PC-3 (cell line): ENCODE measurements at regions of chr1 and their contacts with region 1.

Region 1: DNA sequence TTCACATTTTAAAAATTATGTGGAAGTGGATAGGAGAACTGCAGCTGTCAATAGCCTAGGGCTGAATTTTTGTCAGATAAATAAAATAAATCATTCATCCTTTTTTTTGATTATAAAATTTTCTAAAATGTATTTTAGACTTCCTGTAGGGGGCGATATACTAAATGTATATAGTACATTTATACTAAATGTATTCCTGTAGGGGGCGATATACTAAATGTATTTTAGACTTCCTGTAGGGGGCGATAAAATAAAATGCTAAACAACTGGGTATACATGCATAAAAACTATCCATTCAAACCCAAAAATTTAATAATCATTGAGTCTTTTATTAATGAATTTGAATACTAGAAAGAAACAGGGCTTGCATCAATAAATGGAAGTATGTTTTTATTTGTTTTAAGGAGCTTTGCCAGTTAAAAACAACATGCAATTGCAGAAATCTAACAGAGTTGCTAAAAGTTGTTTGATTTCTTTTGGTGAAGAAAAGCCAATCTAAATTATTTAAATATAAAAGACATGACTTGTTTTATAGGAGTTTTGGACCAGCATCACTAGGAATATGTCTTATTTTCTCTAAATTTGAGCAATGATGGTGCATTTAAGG is 31.4 kb downstream of the CLCA1 start:
- DNase-seq: peak; percentile 63
- ATAC-seq: no peak
- H3K4me3 ChIP-seq: no peak overlapping the region
- H3K27ac ChIP-seq: no peak overlapping the region
- H3K4me1 ChIP-seq: peaks cover 10% of the 10 kb centered on the region
- H3K27me3 ChIP-seq: no peaks in the 10 kb centered on the region
- CTCF ChIP-seq: peak; percentile 99

Region 2: DNA sequence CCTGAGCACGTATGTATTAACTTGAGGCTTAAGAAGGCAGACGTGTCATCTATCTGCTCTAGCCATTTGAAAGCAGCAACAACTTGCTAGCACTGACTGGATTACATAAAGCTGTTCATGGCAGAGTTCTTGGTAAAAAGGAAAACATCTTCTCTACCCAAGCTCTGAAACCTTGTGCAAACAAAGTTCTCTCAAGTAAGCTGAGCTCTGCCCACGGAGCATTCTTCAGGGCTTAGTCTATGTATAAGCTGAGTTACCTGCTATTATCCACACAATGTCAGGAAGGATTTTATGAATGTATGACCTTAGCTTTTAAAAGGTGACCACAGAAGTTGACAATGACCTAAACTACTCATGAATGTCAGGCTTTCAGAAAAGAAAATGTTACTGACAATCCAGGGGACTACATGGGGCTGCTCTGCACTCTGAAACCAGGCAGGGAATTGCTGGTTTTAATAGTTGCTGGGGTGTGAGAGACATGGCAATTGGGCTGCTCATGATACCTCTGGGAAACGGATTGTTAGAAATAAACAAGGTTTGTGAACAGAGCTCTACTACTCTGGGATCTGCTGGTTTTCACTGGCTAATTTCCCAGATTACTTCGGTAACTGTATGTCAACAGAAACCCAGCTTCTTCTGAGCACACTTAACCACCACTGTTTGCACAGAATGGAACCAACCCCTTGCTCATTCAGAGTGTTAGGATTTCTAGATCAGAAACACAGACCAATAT is 949.1 kb before region 1 on chr1:
- CTCF ChIA-PET with region 1: interaction called, 11 read pairs
- POLR2A ChIA-PET with region 1: no interaction called
- intact Hi-C with region 1: no loop called
- DNase-seq: peak; percentile 97
- ATAC-seq: peak; percentile 93
- H3K4me3 ChIP-seq: peak overlapping the region; percentile 41
- H3K27ac ChIP-seq: peak overlapping the region; percentile 86
- H3K4me1 ChIP-seq: peaks cover 77% of the 10 kb centered on the region
- H3K27me3 ChIP-seq: no peaks in the 10 kb centered on the region
- CTCF ChIP-seq: no peak

Region 3: DNA sequence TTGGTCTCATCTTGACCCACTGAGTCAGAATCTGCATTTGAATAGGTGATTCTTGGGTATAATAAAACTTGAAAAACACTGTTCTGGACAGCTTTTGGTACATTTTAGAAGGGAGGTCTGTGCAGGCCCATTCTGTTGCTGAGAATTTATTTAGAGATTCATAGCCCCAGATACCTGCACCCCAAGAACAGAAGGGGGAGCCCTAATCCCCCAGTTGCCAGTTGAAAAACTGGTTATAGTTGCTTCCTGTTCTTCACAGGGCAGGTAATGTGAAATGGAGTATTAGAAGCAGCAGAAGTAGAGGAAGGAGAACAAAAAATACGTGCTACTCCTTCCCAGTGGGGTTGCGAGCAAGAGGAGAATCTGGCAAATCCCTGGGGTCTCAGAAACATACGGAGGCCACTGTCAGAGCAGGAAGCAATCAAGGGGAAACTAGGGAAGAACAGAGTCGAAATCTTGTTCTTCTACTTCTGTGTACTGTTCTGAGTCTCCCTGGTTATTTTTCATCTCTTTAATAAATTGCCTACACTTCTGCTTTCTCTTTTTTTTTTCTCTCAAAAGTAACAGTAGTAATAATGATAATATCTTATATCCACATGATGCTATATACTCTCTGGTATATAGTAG is 80.7 kb before region 1 on chr1:
- CTCF ChIA-PET with region 1: no interaction called
- POLR2A ChIA-PET with region 1: no interaction called
- intact Hi-C with region 1: loop called (anchors 1 kb)
- DNase-seq: peak; percentile 64
- ATAC-seq: peak; percentile 37
- H3K4me3 ChIP-seq: no peak overlapping the region
- H3K27ac ChIP-seq: no peak overlapping the region
- H3K4me1 ChIP-seq: peaks cover 40% of the 10 kb centered on the region
- H3K27me3 ChIP-seq: no peaks in the 10 kb centered on the region
- CTCF ChIP-seq: peak; percentile 75

Region 4: DNA sequence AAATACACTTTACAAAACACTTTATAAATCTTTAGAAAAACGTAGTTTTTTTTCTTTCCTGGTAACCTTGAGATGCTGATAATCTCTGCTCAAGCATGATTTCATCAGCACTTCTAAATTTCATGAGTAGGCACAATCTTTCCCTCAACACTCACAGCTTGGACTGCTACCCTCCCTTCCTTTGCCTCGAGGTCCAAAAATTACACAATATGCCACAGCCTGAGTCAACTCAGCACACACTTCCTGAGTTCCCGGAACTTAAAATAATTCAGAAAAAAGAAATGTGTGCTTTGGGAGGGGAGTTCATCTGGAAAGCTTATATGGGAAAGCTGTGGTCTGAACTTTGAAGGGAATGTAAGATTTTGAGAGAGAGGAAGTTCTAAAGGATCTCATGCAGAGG is 70.3 kb before region 1 on chr1:
- CTCF ChIA-PET with region 1: no interaction called
- POLR2A ChIA-PET with region 1: no interaction called
- intact Hi-C with region 1: loop called (anchors 1 kb)
- DNase-seq: peak; percentile 94
- ATAC-seq: peak; percentile 88
- H3K4me3 ChIP-seq: peak overlapping the region; percentile 49
- H3K27ac ChIP-seq: peak overlapping the region; percentile 98
- H3K4me1 ChIP-seq: peaks cover 44% of the 10 kb centered on the region
- H3K27me3 ChIP-seq: no peaks in the 10 kb centered on the region
- CTCF ChIP-seq: no peak

Region 5: DNA sequence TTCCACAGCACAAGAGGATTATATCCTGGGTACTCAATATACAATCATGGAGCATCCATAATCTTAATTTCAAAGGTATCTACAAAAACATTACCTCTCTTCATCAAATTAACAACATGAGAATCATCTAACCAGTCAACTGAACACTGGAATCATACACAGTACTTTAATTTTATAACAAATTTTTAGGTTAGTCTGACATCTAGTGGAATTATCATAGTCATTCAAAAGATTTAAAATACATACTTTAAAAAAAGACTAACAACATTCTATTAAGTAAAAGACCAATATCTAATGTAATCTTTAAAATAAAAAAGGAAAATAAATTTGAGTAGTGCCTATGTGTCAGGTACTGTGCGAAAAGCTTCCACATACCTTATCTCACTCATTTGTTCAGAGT is 187.5 kb after region 1 on chr1:
- CTCF ChIA-PET with region 1: no interaction called
- POLR2A ChIA-PET with region 1: no interaction called
- intact Hi-C with region 1: loop called (anchors 10 kb)
- DNase-seq: peak; percentile 43
- ATAC-seq: no peak
- H3K4me3 ChIP-seq: no peak overlapping the region
- H3K27ac ChIP-seq: no peak overlapping the region
- H3K4me1 ChIP-seq: no peaks in the 10 kb centered on the region
- H3K27me3 ChIP-seq: no peaks in the 10 kb centered on the region
- CTCF ChIP-seq: peak; percentile 56

Region 6: DNA sequence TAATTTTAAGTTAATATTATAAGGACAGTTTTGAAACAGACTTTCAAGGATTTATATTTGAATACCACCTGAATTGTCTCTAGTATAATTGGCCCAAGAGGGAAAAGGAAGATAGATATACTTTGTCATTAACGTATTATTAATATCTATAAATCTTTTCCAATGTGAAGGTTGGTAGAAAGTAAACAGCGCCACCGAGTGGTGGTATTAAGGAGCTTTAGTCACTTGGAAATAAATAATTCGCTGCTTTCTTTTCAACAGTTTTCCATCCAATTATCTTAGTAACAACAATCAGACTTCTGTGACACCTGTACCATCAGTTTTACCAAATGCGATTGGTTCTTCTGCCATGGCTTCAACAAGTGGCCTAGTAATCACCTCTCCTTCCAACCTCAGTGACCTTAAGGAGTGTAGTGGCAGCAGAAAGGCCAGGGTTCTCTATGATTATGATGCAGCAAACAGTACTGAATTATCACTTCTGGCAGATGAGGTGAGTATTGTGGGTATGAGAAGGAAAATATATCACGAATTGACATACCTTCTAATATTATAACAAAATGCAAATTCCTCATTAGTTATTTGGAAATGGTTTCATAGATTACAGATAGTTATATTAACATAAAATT is 242.0 kb after region 1 on chr1:
- CTCF ChIA-PET with region 1: interaction called, 4 read pairs
- POLR2A ChIA-PET with region 1: no interaction called
- intact Hi-C with region 1: loop called (anchors 5 kb)
- DNase-seq: peak; percentile 66
- ATAC-seq: peak; percentile 27; the same call in 1 of the 2 replicates
- H3K4me3 ChIP-seq: no peak overlapping the region
- H3K27ac ChIP-seq: no peak overlapping the region
- H3K4me1 ChIP-seq: no peaks in the 10 kb centered on the region
- H3K27me3 ChIP-seq: no peaks in the 10 kb centered on the region
- CTCF ChIP-seq: peak; percentile 84

Region 7: GRCh38 chr1:86948212-86948611 is 448.1 kb after region 1 on chr1:
- CTCF ChIA-PET with region 1: no interaction called
- POLR2A ChIA-PET with region 1: no interaction called
- intact Hi-C with region 1: no loop called
- DNase-seq: no peak
- ATAC-seq: no peak
- H3K4me3 ChIP-seq: no peak overlapping the region
- H3K27ac ChIP-seq: no peak overlapping the region
- H3K4me1 ChIP-seq: no peaks in the 10 kb centered on the region
- H3K27me3 ChIP-seq: no peaks in the 10 kb centered on the region
- CTCF ChIP-seq: no peak